ENCODE measurements at regions of chr6 and their contacts with region 1.

Region 1: GRCh38 chr6:26196846-26197648 is 109.8 kb downstream of the HFE start:
- DNase-seq: peak; percentile 81
- H3K4me3 ChIP-seq: peak overlapping the region; percentile 84 to 96
- H3K27ac ChIP-seq: peak overlapping the region; percentile 87 to 94
- H3K4me1 ChIP-seq: peaks cover 12 to 16% of the 10 kb centered on the region in 2 experiments; a peak in 3 of 4 replicates
- H3K27me3 ChIP-seq: no peaks in the 10 kb centered on the region
- CTCF ChIP-seq: peak; percentile 19; the same call in 1 of the 2 replicates
- EP300 ChIP-seq: peak in 1 of 2 experiments; percentile 43; a peak in 1 of 4 replicates
- RAD21 ChIP-seq: no peak

Region 2: DNA sequence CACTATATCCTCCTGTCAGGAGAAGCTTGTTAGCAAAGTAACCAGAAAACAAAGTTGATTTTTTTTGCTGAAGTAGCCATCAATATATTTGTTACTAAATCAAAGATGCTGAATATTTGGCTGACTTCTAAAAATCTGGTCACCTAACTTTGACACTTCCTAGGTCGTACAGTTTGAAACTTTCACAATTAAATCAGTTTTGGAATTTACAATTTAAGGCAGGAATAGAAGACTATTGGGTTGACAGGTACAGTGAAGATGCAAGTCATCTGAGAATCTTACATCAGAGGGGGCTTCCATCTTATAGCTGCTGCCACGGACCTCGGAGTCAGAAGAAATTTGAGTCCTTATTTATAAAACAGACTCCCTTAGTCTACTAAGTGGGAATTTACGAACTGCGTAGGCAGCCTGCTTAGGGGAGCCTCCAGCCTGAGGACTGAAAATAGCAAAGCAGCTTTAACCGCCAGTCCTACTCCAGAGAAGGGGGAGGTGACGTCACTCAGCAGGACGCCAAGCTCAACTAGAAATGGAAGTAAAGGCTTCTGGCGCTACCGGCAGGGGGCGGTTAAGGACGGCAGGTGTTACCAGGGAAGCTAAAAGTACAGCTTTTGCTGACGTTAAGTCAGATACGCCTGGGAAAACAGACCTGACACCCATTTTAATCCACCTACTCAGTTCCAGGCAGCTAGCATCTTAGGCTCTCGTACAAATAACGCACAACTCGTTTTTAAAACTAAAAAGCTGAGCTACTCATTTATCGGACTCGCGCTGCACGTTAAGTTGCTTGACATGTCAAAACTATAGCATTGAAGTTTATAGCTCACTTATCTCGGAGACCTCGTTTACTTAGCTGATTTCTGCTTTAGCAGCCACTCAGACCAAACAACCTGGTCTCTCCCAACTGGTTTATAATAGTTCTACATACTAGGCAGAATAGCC is 170.9 kb before region 1 on chr6:
- CTCF ChIA-PET with region 1: no interaction called
- POLR2A ChIA-PET with region 1: interaction called, 31 read pairs
- DNase-seq: peak; percentile 59
- H3K4me3 ChIP-seq: peak overlapping the region; percentile 70 to 89
- H3K27ac ChIP-seq: peak overlapping the region; percentile 92 to 99
- H3K4me1 ChIP-seq: peaks cover 15 to 34% of the 10 kb centered on the region in 2 experiments; a peak in 3 of 4 replicates
- H3K27me3 ChIP-seq: no peaks in the 10 kb centered on the region
- CTCF ChIP-seq: peak; percentile 91
- EP300 ChIP-seq: peak in 1 of 2 experiments; percentile 22; a peak in 1 of 4 replicates
- RAD21 ChIP-seq: peak; percentile 24; the same call in 1 of the 2 replicates

Region 3: GRCh38 chr6:26103770-26104456 is 93.1 kb before region 1 on chr6:
- CTCF ChIA-PET with region 1: no interaction called
- POLR2A ChIA-PET with region 1: interaction called, 12 read pairs
- DNase-seq: peak; percentile 69
- H3K4me3 ChIP-seq: peak overlapping the region; percentile 55 to 65
- H3K27ac ChIP-seq: peak overlapping the region; percentile 85 to 97
- H3K4me1 ChIP-seq: peaks cover 7 to 17% of the 10 kb centered on the region in 2 experiments
- H3K27me3 ChIP-seq: no peaks in the 10 kb centered on the region
- CTCF ChIP-seq: peak; percentile 62
- EP300 ChIP-seq: peak; percentile 91 to 97
- RAD21 ChIP-seq: no peak

Region 4: GRCh38 chr6:26172496-26172958 is 24.5 kb before region 1 on chr6:
- CTCF ChIA-PET with region 1: interaction called, 5 read pairs
- POLR2A ChIA-PET with region 1: interaction called, 29 read pairs
- DNase-seq: peak; percentile 39
- H3K4me3 ChIP-seq: peak overlapping the region; percentile 60 to 86
- H3K27ac ChIP-seq: peak overlapping the region; percentile 96 to 97
- H3K4me1 ChIP-seq: peaks cover 3 to 12% of the 10 kb centered on the region in 2 experiments; a peak in 3 of 4 replicates
- H3K27me3 ChIP-seq: no peaks in the 10 kb centered on the region
- CTCF ChIP-seq: no peak
- EP300 ChIP-seq: no peak
- RAD21 ChIP-seq: no peak

Region 5: GRCh38 chr6:26223650-26224546 is 26.9 kb after region 1 on chr6:
- CTCF ChIA-PET with region 1: interaction called, 3 read pairs
- POLR2A ChIA-PET with region 1: interaction called, 32 read pairs
- DNase-seq: peak; percentile 36
- H3K4me3 ChIP-seq: peak overlapping the region; percentile 72 to 80
- H3K27ac ChIP-seq: peak overlapping the region; percentile 99 to 100
- H3K4me1 ChIP-seq: peaks cover 8 to 18% of the 10 kb centered on the region in 2 experiments; a peak in 3 of 4 replicates
- H3K27me3 ChIP-seq: no peaks in the 10 kb centered on the region
- CTCF ChIP-seq: no peak; the same call in 1 of the 2 replicates
- EP300 ChIP-seq: 0 out of 4 replicates have a peak, but pooled peaks of 1 of the 2 experiments have one; percentile 3
- RAD21 ChIP-seq: no peak

Region 6: DNA sequence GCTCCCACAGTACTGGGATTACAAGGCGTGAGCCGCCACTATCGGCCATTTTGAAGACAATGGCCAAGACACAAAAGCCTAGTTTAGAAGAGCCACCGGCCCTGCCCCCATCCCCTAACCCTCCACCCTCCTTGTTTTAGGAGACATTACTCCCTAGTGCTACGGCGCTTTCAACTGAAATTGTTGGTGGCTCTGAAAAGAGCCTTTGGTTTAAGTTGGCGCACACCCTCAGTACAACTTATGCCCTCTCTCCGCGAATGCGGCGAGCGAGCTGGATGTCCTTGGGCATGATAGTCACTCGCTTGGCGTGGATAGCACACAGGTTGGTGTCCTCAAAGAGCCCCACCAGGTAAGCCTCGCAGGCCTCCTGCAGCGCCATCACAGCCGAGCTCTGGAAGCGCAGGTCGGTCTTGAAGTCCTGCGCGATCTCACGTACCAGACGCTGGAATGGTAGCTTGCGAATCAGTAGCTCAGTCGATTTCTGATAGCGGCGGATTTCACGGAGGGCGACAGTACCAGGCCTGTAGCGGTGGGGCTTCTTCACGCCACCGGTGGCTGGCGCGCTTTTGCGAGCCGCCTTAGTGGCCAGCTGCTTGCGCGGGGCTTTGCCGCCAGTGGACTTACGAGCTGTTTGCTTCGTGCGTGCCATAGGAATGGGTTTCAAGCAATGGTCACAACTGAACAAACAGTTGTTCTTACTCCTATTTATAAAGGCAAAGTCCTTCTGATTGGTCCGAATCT is 53.1 kb after region 1 on chr6:
- CTCF ChIA-PET with region 1: no interaction called
- POLR2A ChIA-PET with region 1: interaction called, 16 read pairs
- DNase-seq: peak; percentile 58
- H3K4me3 ChIP-seq: peak overlapping the region; percentile 88 to 92
- H3K27ac ChIP-seq: peak overlapping the region; percentile 85 to 97
- H3K4me1 ChIP-seq: peaks cover 0 to 7% of the 10 kb centered on the region in 2 experiments; a peak in 3 of 4 replicates
- H3K27me3 ChIP-seq: no peaks in the 10 kb centered on the region
- CTCF ChIP-seq: peak; percentile 54
- EP300 ChIP-seq: 0 out of 4 replicates have a peak, but pooled peaks of 1 of the 2 experiments have one; percentile 12
- RAD21 ChIP-seq: no peak; the same call in 1 of the 2 replicates

Measured in SK-N-SH (cell line).